HepG2 (cell line): ENCODE measurements at regions of chr2 and their contacts with region 1.

Region 1: GRCh38 chr2:194166818-194167217 is 1490.2 kb upstream of the SLC39A10 start:
- DNase-seq: peak; percentile 39
- ATAC-seq: peak; percentile 86
- H3K4me3 ChIP-seq: no peak overlapping the region
- H3K27ac ChIP-seq: no peak overlapping the region
- H3K4me1 ChIP-seq: no peaks in the 10 kb centered on the region
- H3K27me3 ChIP-seq: no peaks in the 10 kb centered on the region
- CTCF ChIP-seq: peak; percentile 65
- EP300 ChIP-seq: no peak
- POLR2A ChIP-seq: no peak
- RAD21 ChIP-seq: no peak

Region 2: DNA sequence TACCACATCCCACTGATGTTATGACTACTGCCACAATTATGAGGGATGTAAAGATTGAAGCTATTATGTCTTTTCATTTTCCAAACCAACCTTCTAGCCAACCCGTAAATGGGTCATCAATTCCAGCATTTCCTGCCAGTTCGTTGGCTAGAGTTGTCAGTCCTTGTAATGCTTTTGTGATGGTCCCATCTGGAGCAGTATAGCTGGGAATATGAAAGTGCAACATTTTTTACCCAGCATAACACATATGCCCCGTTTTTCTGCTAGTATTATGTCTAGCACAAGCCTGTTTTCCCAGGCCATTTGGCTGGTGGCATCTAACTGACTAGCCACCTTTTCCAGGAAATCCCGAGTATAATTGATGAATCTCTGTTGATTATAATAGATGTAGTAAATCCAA is 11.4 kb before region 1 on chr2:
- CTCF ChIA-PET with region 1: no interaction called
- POLR2A ChIA-PET with region 1: no interaction called
- in situ Hi-C with region 1: no loop called
- intact Hi-C with region 1: no loop called
- DNase-seq: no peak
- ATAC-seq: no peak
- H3K4me3 ChIP-seq: no peak overlapping the region
- H3K27ac ChIP-seq: no peak overlapping the region
- H3K4me1 ChIP-seq: no peaks in the 10 kb centered on the region
- H3K27me3 ChIP-seq: no peaks in the 10 kb centered on the region
- CTCF ChIP-seq: no peak
- EP300 ChIP-seq: no peak
- POLR2A ChIP-seq: no peak
- RAD21 ChIP-seq: no peak

Region 3: GRCh38 chr2:194819344-194819743 is 652.5 kb after region 1 on chr2:
- CTCF ChIA-PET with region 1: no interaction called
- POLR2A ChIA-PET with region 1: no interaction called
- in situ Hi-C with region 1: no loop called
- intact Hi-C with region 1: loop called (anchors 2 kb)
- DNase-seq: no peak
- ATAC-seq: no peak
- H3K4me3 ChIP-seq: no peak overlapping the region
- H3K27ac ChIP-seq: no peak overlapping the region
- H3K4me1 ChIP-seq: no peaks in the 10 kb centered on the region
- H3K27me3 ChIP-seq: no peaks in the 10 kb centered on the region
- CTCF ChIP-seq: no peak
- EP300 ChIP-seq: no peak
- POLR2A ChIP-seq: no peak
- RAD21 ChIP-seq: no peak